ENCODE measurements at regions of chr18 and their contacts with region 1.

Region 1: DNA sequence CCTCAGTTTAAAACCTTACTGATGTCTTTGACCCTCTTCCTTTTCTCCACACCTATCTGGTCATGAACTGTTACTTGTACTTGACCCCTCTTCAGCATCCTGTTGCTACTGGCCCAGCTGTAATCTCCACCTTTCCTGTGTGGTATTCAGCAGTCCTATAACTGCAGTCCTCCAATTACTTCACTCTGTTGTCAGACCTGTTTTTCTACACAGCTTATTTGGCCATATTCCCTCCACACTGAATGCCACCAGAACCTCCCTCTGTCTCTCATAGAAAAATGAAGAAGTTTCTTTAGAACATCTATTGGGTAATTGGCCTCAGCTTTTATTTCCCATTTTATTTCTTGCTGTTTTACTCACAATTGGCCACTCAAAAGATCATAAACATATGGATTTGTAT is 155.4 kb downstream of the ASXL3 start:
- DNase-seq: no peak
- H3K4me3 ChIP-seq: no peak overlapping the region
- H3K27ac ChIP-seq: no peak overlapping the region
- H3K4me1 ChIP-seq: no peaks in the 10 kb centered on the region
- H3K27me3 ChIP-seq: no peaks in the 10 kb centered on the region
- CTCF ChIP-seq: no peak
- EP300 ChIP-seq: no peak
- POLR2A ChIP-seq: no peak

Region 2: GRCh38 chr18:33682436-33682835 is 50.9 kb before region 1 on chr18:
- intact Hi-C with region 1: loop called (anchors 10 kb)
- DNase-seq: no peak
- H3K4me3 ChIP-seq: no peak overlapping the region
- H3K27ac ChIP-seq: no peak overlapping the region
- H3K4me1 ChIP-seq: no peaks in the 10 kb centered on the region
- H3K27me3 ChIP-seq: no peaks in the 10 kb centered on the region
- CTCF ChIP-seq: no peak
- EP300 ChIP-seq: no peak
- POLR2A ChIP-seq: no peak

Region 3: GRCh38 chr18:33711514-33711913 is 21.9 kb before region 1 on chr18:
- intact Hi-C with region 1: no loop called
- DNase-seq: no peak
- H3K4me3 ChIP-seq: no peak overlapping the region
- H3K27ac ChIP-seq: no peak overlapping the region
- H3K4me1 ChIP-seq: no peaks in the 10 kb centered on the region
- H3K27me3 ChIP-seq: no peaks in the 10 kb centered on the region
- CTCF ChIP-seq: no peak
- EP300 ChIP-seq: no peak
- POLR2A ChIP-seq: no peak

Measured in sigmoid colon (tissue), 7 donors.